PC-3 (cell line): ENCODE measurements at regions of chrX and their contacts with region 1.

Region 1: DNA sequence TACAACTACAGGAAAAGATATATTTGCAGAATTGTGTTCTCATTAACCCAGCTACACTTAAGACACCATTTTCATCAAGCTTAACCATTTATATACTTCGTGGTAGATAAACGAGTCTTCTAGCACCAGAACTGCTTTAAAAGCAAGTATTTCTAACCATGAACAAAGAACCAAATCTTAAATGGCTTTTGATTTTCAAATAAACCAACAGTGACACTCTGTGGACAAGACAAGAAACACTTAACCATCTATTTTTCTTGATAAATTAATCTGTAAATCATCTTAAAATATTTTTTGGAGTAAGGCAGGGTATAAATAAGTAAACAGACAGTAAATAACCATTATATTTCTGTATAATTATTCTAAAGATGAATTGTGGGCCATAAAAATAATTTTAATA is 10.2 kb downstream of the BEND2 start:
- DNase-seq: peak; percentile 40
- ATAC-seq: no peak
- H3K4me3 ChIP-seq: no peak overlapping the region
- H3K27ac ChIP-seq: no peak overlapping the region
- H3K4me1 ChIP-seq: no peaks in the 10 kb centered on the region
- H3K27me3 ChIP-seq: no peaks in the 10 kb centered on the region; the same call in 1 of the 2 replicates
- CTCF ChIP-seq: peak; percentile 56; the same call in 1 of the 2 replicates

Region 2: GRCh38 chrX:17744896-17745523 is 465.5 kb before region 1 on chrX:
- CTCF ChIA-PET with region 1: no interaction called
- POLR2A ChIA-PET with region 1: no interaction called
- intact Hi-C with region 1: loop called (anchors 2 kb)
- DNase-seq: peak; percentile 39
- ATAC-seq: no peak
- H3K4me3 ChIP-seq: no peak overlapping the region
- H3K27ac ChIP-seq: no peak overlapping the region
- H3K4me1 ChIP-seq: peaks cover 29% of the 10 kb centered on the region
- H3K27me3 ChIP-seq: no peaks in the 10 kb centered on the region
- CTCF ChIP-seq: peak; percentile 67

Region 3: DNA sequence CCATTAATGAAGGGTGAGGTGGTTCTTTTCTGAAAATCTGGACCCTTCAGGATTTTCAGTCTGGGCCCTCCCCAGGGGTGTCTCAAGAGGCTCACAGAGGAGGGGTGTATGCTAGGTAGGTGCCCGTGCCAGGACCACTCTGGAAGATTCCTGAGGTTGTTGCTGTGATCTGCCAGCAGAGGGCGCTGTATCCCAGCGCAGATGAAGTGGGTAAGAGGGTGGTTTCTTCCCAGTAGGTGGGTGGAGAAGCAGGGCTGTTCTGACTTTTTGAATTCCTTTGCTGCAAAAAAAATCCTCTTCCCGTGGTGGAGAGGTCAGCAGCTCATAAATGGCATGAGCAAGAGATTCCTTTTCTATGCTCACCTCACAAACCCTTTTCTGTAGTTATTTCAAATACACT is 422.0 kb before region 1 on chrX:
- CTCF ChIA-PET with region 1: no interaction called
- POLR2A ChIA-PET with region 1: no interaction called
- intact Hi-C with region 1: loop called (anchors 1 kb)
- DNase-seq: peak; percentile 74
- ATAC-seq: peak; percentile 88
- H3K4me3 ChIP-seq: no peak overlapping the region
- H3K27ac ChIP-seq: no peak overlapping the region
- H3K4me1 ChIP-seq: peaks cover 11% of the 10 kb centered on the region; the same call in 1 of the 2 replicates
- H3K27me3 ChIP-seq: no peaks in the 10 kb centered on the region
- CTCF ChIP-seq: peak; percentile 87

Region 4: DNA sequence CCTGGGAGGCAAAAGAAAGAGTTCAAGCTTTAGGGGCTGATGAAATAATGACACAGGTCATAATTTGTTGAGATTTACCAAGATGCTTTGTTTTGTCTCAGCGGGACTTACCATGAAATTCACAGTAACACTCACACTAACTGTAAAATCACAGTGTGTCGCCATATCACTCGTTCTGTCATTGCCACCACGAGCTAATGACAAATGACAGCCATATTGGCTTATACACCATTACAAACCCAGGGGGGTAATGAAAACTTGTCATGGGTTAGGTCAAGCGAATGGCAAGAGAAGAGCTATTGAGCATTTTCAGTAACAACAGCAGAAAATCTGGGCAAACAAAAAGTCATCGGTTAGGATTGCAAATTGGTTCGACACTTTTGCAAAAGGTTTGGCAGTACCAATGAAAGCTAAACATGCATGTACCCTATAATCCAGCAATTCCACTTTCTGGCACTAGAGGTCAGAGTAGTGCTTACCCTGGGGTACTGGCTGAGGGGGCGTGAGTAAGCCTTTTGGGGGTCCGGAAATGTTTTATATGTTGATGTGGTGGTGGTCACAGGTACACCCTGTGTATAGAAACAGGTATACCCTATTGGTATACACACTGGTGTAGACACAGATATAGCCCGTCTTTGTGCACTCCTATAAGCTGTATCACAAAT is 265.5 kb before region 1 on chrX:
- CTCF ChIA-PET with region 1: no interaction called
- POLR2A ChIA-PET with region 1: no interaction called
- intact Hi-C with region 1: loop called (anchors 10 kb)
- DNase-seq: peak; percentile 61
- ATAC-seq: peak; percentile 37; the same call in 1 of the 2 replicates
- H3K4me3 ChIP-seq: no peak overlapping the region
- H3K27ac ChIP-seq: no peak overlapping the region
- H3K4me1 ChIP-seq: no peaks in the 10 kb centered on the region
- H3K27me3 ChIP-seq: no peaks in the 10 kb centered on the region
- CTCF ChIP-seq: peak; percentile 83

Region 5: DNA sequence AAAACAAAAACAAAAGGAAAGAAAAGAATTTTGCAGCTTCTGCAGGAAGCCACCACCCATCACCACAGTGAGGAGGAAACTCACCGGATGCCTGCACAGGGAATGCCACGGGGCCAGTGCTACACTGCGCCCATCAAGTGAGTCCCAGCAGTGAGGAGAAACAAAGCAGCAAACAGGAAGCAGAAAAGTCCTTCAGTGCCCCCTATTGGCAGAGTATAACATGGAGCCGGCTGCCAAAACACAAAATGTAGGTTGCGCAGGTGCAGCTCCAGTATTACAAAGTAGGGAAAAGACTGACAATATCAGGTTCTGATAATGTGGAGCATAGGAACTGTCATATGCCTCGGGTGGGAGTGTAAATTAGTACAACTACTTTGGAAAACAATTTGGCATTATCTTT is 167.3 kb after region 1 on chrX:
- CTCF ChIA-PET with region 1: interaction called, 5 read pairs
- POLR2A ChIA-PET with region 1: no interaction called
- intact Hi-C with region 1: loop called (anchors 5 kb)
- DNase-seq: peak; percentile 54
- ATAC-seq: peak; percentile 80
- H3K4me3 ChIP-seq: no peak overlapping the region
- H3K27ac ChIP-seq: no peak overlapping the region
- H3K4me1 ChIP-seq: no peaks in the 10 kb centered on the region
- H3K27me3 ChIP-seq: no peaks in the 10 kb centered on the region
- CTCF ChIP-seq: peak; percentile 71